Thyroid gland (tissue), 4 donors: ENCODE measurements at regions of chr10 and their contacts with region 1.

Region 1: GRCh38 chr10:87861953-87862678 is 1.2 kb downstream of the KLLN start:
- DNase-seq: peak; percentile 98
- H3K4me3 ChIP-seq: peak overlapping the region; percentile 65 to 86 (median 86)
- H3K27ac ChIP-seq: peak overlapping the region; percentile 93 to 99 (median 99)
- H3K4me1 ChIP-seq: peaks cover 0 to 8% of the 10 kb centered on the region in 2 donors
- H3K27me3 ChIP-seq: no peaks in the 10 kb centered on the region
- CTCF ChIP-seq: peak in 2 of 6 experiments; percentile 2 to 3
- POLR2A ChIP-seq: peak; percentile 53 to 77

Region 2: GRCh38 chr10:88091490-88092105 is 229.5 kb after region 1 on chr10:
- intact Hi-C with region 1: no loop called
- DNase-seq: no peak
- H3K4me3 ChIP-seq: no peak overlapping the region
- H3K27ac ChIP-seq: no peak overlapping the region
- H3K4me1 ChIP-seq: peaks cover 33 to 37% of the 10 kb centered on the region in 2 donors
- H3K27me3 ChIP-seq: no peaks in the 10 kb centered on the region
- CTCF ChIP-seq: no peak
- POLR2A ChIP-seq: no peak

Region 3: DNA sequence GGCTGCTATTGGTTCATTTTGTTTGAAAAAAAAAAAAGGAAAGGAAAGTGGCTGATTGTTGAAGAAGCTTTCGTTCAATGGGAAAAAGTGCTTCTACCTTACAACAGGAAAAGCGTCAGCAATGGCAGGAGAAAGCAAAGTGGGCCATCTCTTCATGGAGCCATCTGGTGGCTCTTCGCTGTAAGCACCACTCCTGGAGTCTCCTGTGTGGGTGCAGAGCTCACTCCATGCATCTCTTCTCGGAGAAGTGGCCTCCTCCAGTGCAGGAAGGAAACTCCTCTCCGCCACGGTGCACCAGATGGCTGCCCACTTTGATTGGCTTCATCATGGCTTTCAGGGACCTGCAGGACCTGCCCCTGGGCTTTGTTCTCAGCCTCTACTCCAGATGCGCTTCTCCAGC is 252.3 kb after region 1 on chr10:
- intact Hi-C with region 1: loop called (anchors 10 kb)
- DNase-seq: peak; percentile 48 to 56
- H3K4me3 ChIP-seq: no peak overlapping the region
- H3K27ac ChIP-seq: no peak overlapping the region
- H3K4me1 ChIP-seq: peaks cover 12 to 23% of the 10 kb centered on the region in 2 donors
- H3K27me3 ChIP-seq: no peaks in the 10 kb centered on the region
- CTCF ChIP-seq: peak in 4 of 6 experiments; percentile 26 to 53 (median 50)
- POLR2A ChIP-seq: no peak

Region 4: DNA sequence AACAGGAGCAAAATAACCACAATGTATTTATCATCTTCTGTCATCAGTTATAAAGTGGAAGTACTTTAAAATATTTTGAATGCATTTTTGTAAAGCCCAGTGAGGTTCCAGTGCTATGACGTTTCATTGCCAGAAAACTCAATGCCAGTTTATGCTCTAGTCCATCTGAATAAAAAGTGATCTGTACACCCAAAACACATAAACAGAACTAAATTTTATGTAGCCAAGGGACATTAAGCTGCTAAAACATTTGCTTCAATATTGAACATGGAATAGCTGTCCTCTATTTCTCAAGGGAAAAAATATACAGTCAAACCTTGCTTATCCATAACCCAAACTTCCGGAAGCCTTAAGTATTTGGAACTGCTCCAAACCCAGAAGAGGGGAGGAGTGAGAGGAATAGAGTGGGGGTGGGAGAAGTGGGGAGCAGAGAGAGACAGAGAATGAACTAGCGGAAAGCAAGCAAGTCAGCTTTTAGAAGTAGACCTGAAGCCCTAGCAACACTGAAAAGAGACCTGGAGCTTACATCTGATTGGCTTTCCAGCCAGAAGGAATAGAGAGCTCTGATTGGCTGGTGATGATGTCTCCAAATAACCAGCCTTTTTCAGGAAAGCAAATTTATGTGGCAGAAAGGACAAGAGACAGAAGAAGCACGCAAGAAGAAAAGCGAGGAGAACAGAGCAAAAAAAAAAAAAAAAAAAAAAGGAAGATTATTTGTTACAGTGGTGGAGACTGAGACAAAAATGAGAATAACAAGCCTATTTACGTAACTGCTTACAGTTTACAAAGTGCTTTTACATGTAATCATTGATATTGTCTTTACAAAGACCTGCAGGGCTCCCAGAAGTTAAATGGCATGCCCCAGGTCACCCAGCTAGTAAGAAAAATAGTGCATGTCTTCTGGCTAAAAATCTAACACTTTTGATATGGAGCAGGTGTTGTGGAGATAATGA is 525.0 kb after region 1 on chr10:
- intact Hi-C with region 1: loop called (anchors 5 kb)
- DNase-seq: peak; percentile 23 to 30
- H3K4me3 ChIP-seq: no peak overlapping the region
- H3K27ac ChIP-seq: peak overlapping the region; percentile 23 to 61 (median 40)
- H3K4me1 ChIP-seq: peaks cover 18 to 25% of the 10 kb centered on the region in 2 donors
- H3K27me3 ChIP-seq: no peaks in the 10 kb centered on the region
- CTCF ChIP-seq: no peak
- POLR2A ChIP-seq: peak in 1 of 2 donors; percentile 61

Region 5: DNA sequence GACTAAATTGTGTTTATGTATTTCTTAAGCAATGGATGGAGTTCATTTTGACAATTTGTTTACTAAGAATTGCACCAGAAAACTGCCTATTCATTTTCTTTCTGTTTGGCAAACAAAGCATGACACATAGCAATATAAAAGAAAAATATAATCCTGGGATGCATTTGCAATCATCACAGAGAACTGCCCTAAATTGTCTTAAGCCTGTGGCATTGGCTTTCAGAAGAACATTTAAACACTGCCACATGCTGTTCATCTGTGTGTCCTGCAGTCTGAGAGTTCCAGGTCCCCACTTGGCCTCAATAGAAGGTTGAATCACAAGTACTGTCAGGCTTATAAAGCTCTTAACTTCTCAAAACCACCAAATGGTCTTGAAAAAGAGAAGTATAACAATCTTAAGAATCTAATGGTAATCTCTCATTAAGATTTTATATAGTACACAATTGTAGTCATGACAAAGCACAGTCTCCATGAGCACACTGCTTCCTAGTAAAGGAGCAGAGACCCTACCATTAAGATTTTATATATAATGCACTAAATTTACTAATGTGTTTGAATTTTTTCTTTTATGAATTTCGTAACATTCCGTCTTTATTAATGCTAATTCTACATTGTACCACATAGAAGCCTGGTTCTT is 691.1 kb after region 1 on chr10:
- intact Hi-C with region 1: loop called (anchors 5 kb)
- DNase-seq: peak; percentile 44 to 60
- H3K4me3 ChIP-seq: no peak overlapping the region
- H3K27ac ChIP-seq: no peak overlapping the region
- H3K4me1 ChIP-seq: no peaks in the 10 kb centered on the region
- H3K27me3 ChIP-seq: no peaks in the 10 kb centered on the region
- CTCF ChIP-seq: peak; percentile 44 to 92 (median 78)
- POLR2A ChIP-seq: no peak